ENCODE measurements at regions of chr5 and their contacts with region 1.

Region 1: GRCh38 chr5:169149317-169149716 is 151.6 kb downstream of the SLIT3 start:
- DNase-seq: no peak
- H3K4me3 ChIP-seq: no peak overlapping the region
- H3K27ac ChIP-seq: no peak overlapping the region
- H3K4me1 ChIP-seq: peaks cover 0 to 70% (median 56%) of the 10 kb centered on the region in 4 donors
- H3K27me3 ChIP-seq: no peaks in the 10 kb centered on the region
- CTCF ChIP-seq: no peak
- EP300 ChIP-seq: no peak
- POLR2A ChIP-seq: no peak

Region 2: GRCh38 chr5:169003721-169004541 is 145.4 kb before region 1 on chr5:
- intact Hi-C with region 1: loop called (anchors 10 kb)
- DNase-seq: no peak
- H3K4me3 ChIP-seq: no peak overlapping the region
- H3K27ac ChIP-seq: peak overlapping the region in 2 of 4 donors; percentile 36 to 48
- H3K4me1 ChIP-seq: peaks cover 0 to 16% (median 9%) of the 10 kb centered on the region in 4 donors
- H3K27me3 ChIP-seq: no peaks in the 10 kb centered on the region
- CTCF ChIP-seq: peak in 2 of 4 experiments; percentile 40 to 48
- EP300 ChIP-seq: no peak
- POLR2A ChIP-seq: no peak

Region 3: DNA sequence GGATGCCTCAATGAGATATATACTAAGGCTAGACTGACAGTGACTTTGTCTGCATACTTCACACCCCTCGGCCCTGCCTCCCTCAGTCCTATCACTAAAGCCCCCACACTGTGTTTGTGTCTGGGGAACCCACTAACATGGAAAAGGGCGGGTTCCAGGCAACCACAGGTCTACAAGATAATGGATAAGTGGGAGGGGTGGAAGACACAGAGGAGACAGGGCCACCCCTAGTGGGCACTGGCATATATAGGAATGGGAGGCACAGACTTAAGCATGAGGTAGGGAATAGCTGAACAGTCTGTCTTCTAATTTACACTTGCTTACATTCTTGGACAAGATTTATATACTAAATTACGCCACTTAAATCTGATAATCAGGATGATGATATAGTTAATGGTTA is 77.6 kb after region 1 on chr5:
- intact Hi-C with region 1: no loop called
- DNase-seq: no peak
- H3K4me3 ChIP-seq: no peak overlapping the region
- H3K27ac ChIP-seq: no peak overlapping the region
- H3K4me1 ChIP-seq: peaks cover 0 to 17% (median 15%) of the 10 kb centered on the region in 4 donors
- H3K27me3 ChIP-seq: no peaks in the 10 kb centered on the region
- CTCF ChIP-seq: no peak
- EP300 ChIP-seq: no peak
- POLR2A ChIP-seq: no peak

Region 4: DNA sequence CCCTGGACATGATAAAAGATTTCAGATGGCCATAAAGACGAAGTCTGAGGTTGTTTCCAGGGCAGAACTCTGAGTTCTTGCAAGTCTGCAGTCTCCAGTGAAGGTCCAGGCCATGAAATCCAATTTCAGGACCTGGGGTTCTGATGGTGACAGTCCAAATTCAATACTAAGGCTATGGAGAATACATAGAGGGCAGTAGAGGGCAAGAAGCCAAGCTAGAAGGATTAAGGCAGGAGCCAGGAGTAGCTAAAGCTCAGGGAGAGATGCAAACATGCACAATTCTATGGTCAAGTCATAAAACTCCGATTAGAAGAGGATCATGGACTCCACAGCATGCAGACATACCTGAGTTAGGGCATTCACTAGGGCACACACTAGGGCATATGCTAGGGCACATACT is 140.2 kb after region 1 on chr5:
- intact Hi-C with region 1: loop called (anchors 10 kb)
- DNase-seq: no peak
- H3K4me3 ChIP-seq: no peak overlapping the region
- H3K27ac ChIP-seq: peak overlapping the region; percentile 76 to 87 (median 80)
- H3K4me1 ChIP-seq: peaks cover 0 to 70% (median 56%) of the 10 kb centered on the region in 4 donors
- H3K27me3 ChIP-seq: no peaks in the 10 kb centered on the region
- CTCF ChIP-seq: no peak
- EP300 ChIP-seq: no peak
- POLR2A ChIP-seq: no peak

Measured in sigmoid colon (tissue), 7 donors.